Aorta (tissue), 5 donors: ENCODE measurements at regions of chr3 and their contacts with region 1.

Region 1: DNA sequence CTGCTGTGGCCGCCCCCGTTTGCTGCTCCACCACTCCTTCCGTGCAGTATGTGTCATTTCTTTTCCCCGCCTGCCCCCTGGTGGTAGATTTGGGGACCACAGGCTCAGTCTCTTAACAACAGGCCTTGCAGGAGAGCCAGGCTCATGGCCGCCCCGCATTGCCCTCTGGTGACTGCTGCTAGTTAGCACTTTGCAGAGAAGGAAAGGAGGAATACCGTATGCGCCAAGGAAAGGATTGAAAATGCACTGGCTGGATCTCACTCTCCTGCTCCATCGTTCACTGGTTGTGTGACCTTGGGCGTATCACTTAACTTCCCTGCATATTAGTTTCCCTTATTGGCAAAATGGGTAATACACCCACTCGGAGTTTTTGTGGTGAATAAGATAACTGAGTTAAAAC is 39.3 kb upstream of the PXYLP1 start:
- DNase-seq: peak; percentile 98 to 99
- ATAC-seq: peak; percentile 98
- H3K4me3 ChIP-seq: no peak overlapping the region
- H3K27ac ChIP-seq: no peak overlapping the region
- H3K4me1 ChIP-seq: no peaks in the 10 kb centered on the region
- H3K27me3 ChIP-seq: no peaks in the 10 kb centered on the region

Region 2: GRCh38 chr3:140898340-140899180 is 293.8 kb before region 1 on chr3:
- intact Hi-C with region 1: loop called (anchors 1 to 5 kb)
- DNase-seq: no peak
- ATAC-seq: no peak
- H3K4me3 ChIP-seq: no peak overlapping the region
- H3K27ac ChIP-seq: no peak overlapping the region
- H3K4me1 ChIP-seq: no peaks in the 10 kb centered on the region
- H3K27me3 ChIP-seq: no peaks in the 10 kb centered on the region

Region 3: DNA sequence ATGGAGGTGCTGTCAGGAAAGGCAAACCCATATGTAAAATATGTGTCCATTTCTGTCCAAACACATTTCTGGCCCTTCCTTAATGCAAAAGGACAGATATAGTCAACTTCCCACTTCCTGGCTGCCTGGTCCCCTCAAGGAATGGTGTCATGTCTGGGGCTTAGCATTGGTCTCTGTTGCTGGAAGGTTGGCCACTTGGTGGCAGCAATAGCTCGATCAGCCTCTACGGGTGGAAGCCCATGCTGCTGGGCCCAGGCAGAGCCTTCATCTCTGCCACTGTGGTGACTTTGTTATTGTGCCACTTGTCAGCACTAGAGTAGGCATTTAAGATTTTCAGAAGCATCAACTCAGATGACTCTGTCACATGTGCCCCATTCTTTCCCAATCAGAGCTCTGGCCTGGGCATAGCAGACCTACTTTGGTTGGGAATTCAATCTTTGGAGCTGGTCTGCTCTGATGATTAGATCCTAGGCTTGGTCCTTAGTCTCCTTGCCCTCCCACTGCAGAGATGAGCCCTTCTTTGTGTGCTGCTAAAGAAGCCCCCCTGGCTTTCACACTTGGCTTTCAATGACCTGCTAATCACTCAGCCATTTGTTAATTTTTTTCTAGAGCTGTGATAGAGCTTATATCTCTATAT is 192.2 kb before region 1 on chr3:
- intact Hi-C with region 1: loop called (anchors 1 kb)
- DNase-seq: peak; percentile 78 to 86
- ATAC-seq: peak; percentile 85
- H3K4me3 ChIP-seq: no peak overlapping the region
- H3K27ac ChIP-seq: no peak overlapping the region
- H3K4me1 ChIP-seq: no peaks in the 10 kb centered on the region
- H3K27me3 ChIP-seq: no peaks in the 10 kb centered on the region

Region 4: GRCh38 chr3:141011232-141011996 is 180.9 kb before region 1 on chr3:
- intact Hi-C with region 1: loop called in 1 of 2 experiments (anchors 2 kb)
- DNase-seq: peak; percentile 85 to 94
- ATAC-seq: peak; percentile 83
- H3K4me3 ChIP-seq: no peak overlapping the region
- H3K27ac ChIP-seq: no peak overlapping the region
- H3K4me1 ChIP-seq: no peaks in the 10 kb centered on the region
- H3K27me3 ChIP-seq: no peaks in the 10 kb centered on the region

Region 5: GRCh38 chr3:141095546-141095937 is 96.8 kb before region 1 on chr3:
- intact Hi-C with region 1: no loop called
- DNase-seq: no peak
- ATAC-seq: no peak
- H3K4me3 ChIP-seq: no peak overlapping the region
- H3K27ac ChIP-seq: peak overlapping the region in 1 of 2 donors; percentile 68
- H3K4me1 ChIP-seq: peaks cover 0 to 3% of the 10 kb centered on the region in 2 donors
- H3K27me3 ChIP-seq: no peaks in the 10 kb centered on the region

Region 6: DNA sequence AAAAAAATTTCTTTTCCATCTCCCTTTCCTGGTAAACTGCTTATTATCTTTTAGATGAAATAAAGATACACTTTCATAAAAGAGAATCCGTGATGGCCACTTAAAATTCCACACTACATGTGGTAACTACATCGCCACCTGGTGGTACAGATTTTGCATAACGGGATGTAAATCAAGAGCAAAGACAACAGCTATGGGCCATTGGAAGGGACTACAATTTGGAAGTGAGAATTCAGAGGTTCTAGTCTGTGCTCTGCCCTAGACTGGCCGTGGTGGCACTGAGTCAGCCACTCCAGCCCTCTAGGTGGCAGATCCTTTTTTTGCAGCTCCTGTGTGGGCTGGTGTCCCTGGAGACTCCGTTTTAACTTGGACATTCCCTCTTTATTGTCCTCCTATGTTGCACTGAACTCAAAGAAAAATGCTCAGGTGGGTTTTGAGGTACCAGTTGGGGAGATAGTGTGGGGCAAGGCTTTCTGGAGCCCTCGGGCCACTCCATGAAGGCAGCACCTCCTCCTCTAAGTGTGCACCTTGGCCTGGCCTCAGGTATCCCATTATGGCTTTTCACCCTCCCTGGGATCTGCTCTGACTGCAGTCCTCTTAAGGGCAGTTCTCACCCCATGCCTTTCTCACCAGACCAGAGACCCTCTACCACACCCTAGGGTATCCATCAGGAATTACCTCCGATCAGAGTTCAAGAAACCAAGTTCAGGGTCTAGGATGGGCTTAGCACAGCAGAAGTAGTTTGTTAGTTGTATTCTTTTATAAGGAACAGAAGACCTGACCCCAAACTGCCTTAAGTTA is 86.3 kb before region 1 on chr3:
- intact Hi-C with region 1: loop called (anchors 5 kb)
- DNase-seq: peak in 1 of 2 donors; percentile 74
- ATAC-seq: peak; percentile 67
- H3K4me3 ChIP-seq: no peak overlapping the region
- H3K27ac ChIP-seq: no peak overlapping the region
- H3K4me1 ChIP-seq: no peaks in the 10 kb centered on the region
- H3K27me3 ChIP-seq: no peaks in the 10 kb centered on the region